B cell (primary cell): ENCODE measurements at regions of chr10 and their contacts with region 1.

Region 1: DNA sequence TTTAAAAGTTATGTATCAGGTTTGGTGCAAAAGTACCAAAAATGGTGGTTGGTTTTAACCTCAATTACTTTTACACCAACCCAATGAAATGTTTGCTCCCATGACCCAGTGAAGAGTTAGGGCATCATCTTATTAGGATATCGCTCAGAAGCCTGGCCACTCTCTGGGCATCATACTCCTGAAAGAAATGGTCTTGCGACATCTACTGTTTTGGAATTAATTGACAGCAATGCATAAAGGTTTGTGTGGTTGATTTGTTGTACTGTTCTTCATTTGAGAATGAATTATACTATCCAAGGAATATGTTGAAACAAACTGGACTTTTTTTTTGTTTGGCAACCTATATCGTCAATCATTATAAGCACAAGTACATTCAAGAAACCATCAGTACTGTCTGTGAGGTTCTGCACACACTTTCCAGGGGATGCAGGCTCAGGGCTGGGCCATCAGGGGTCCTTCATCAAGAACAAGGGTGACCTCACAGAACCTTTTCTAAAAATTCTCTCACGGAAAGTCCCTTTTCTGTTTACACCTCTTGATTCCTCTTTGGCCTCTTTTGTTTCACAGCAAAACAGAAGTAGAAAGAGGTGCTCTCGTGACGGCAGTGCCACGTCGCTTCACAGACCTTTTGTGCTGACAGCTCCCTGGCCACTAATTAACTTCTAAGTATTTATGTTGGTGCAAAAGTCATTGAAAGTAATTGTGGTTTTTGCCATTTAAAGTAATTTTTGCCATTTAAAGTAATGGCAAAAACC is 117.2 kb upstream of the KLF6 start:
- DNase-seq: peak; percentile 91
- ATAC-seq: peak; percentile 84
- H3K4me3 ChIP-seq: peak overlapping the region in 1 of 5 experiments; percentile 30
- H3K4me3 Mint-ChIP-seq: peak overlapping the region; percentile 57
- H3K27ac ChIP-seq: peak overlapping the region; percentile 94 to 99
- H3K27ac Mint-ChIP-seq: peak overlapping the region; percentile 94
- H3K4me1 ChIP-seq: peaks cover 50 to 64% of the 10 kb centered on the region in 2 donors
- H3K4me1 Mint-ChIP-seq: peaks cover 52% of the 10 kb centered on the region
- H3K27me3 ChIP-seq: no peaks in the 10 kb centered on the region
- H3K27me3 Mint-ChIP-seq: no peaks in the 10 kb centered on the region
- CTCF ChIP-seq: peak; percentile 24

Region 2: GRCh38 chr10:3805791-3806461 is 96.3 kb before region 1 on chr10:
- CTCF ChIA-PET with region 1: no interaction called
- POLR2A ChIA-PET with region 1: no interaction called
- intact Hi-C with region 1: loop called (anchors 1 kb)
- DNase-seq: peak; percentile 59
- ATAC-seq: peak; percentile 54
- H3K4me3 ChIP-seq: peak overlapping the region in 1 of 5 experiments; percentile 16
- H3K4me3 Mint-ChIP-seq: peak overlapping the region; percentile 74
- H3K27ac ChIP-seq: peak overlapping the region; percentile 84 to 85
- H3K27ac Mint-ChIP-seq: peak overlapping the region; percentile 97
- H3K4me1 ChIP-seq: peaks cover 49 to 50% of the 10 kb centered on the region in 2 donors
- H3K4me1 Mint-ChIP-seq: peaks cover 58% of the 10 kb centered on the region
- H3K27me3 ChIP-seq: no peaks in the 10 kb centered on the region
- H3K27me3 Mint-ChIP-seq: no peaks in the 10 kb centered on the region
- CTCF ChIP-seq: no peak

Region 3: DNA sequence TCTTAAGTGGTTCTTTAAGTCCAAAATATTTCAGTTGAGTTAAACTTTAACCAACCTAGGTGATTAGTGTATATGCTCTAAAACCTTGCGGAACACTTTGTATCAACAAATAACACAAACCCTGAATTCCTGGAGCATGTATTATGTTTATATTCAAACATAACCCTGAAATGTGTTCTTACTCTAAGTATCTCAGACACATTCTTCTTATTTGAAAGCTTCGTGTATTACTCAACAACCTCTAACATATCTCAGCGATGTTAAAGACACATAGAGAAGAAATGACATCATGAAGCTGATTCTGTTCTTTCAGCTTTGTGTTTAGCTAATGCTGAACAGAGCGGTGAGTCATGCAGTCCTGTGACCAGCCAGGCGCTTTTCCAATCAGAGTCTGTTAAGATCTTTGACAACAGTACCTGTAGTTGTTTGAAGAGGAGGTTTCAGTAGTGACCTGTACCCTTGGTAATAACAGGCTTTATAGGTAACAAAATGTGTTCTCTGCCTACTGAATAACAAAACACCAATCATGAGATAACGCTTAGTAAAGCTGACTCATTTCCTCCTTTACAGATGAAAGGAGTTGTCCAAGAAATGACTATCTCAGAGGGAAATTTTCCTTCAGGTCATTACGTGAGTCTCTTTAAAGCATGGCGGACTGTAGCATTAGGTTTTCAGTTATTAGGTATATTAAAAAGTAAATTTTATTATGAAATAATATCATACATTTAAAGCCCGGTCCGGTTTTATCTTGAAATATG is 49.9 kb before region 1 on chr10:
- CTCF ChIA-PET with region 1: no interaction called
- POLR2A ChIA-PET with region 1: no interaction called
- intact Hi-C with region 1: loop called (anchors 1 kb)
- DNase-seq: peak; percentile 53
- ATAC-seq: peak; percentile 70
- H3K4me3 ChIP-seq: no peak overlapping the region
- H3K4me3 Mint-ChIP-seq: peak overlapping the region; percentile 50
- H3K27ac ChIP-seq: peak overlapping the region; percentile 66 to 74
- H3K27ac Mint-ChIP-seq: peak overlapping the region; percentile 85
- H3K4me1 ChIP-seq: peaks cover 15 to 22% of the 10 kb centered on the region in 2 donors
- H3K4me1 Mint-ChIP-seq: peaks cover 32% of the 10 kb centered on the region
- H3K27me3 ChIP-seq: no peaks in the 10 kb centered on the region
- H3K27me3 Mint-ChIP-seq: no peaks in the 10 kb centered on the region
- CTCF ChIP-seq: no peak

Region 4: GRCh38 chr10:3935141-3935540 is 32.9 kb after region 1 on chr10:
- CTCF ChIA-PET with region 1: interaction called, 3 read pairs
- POLR2A ChIA-PET with region 1: no interaction called
- intact Hi-C with region 1: loop called (anchors 2 kb)
- DNase-seq: peak; percentile 78
- ATAC-seq: peak; percentile 97
- H3K4me3 ChIP-seq: peak overlapping the region in 4 of 5 experiments; percentile 10 to 51 (median 40)
- H3K4me3 Mint-ChIP-seq: peak overlapping the region; percentile 72
- H3K27ac ChIP-seq: peak overlapping the region; percentile 68
- H3K27ac Mint-ChIP-seq: peak overlapping the region; percentile 87
- H3K4me1 ChIP-seq: peaks cover 13 to 21% of the 10 kb centered on the region in 2 donors
- H3K4me1 Mint-ChIP-seq: peaks cover 27% of the 10 kb centered on the region
- H3K27me3 ChIP-seq: no peaks in the 10 kb centered on the region
- H3K27me3 Mint-ChIP-seq: no peaks in the 10 kb centered on the region
- CTCF ChIP-seq: no peak

Region 5: GRCh38 chr10:4131407-4132228 is 229.4 kb after region 1 on chr10:
- CTCF ChIA-PET with region 1: no interaction called
- POLR2A ChIA-PET with region 1: no interaction called
- intact Hi-C with region 1: loop called (anchors 10 kb)
- DNase-seq: peak; percentile 79
- ATAC-seq: peak; percentile 71
- H3K4me3 ChIP-seq: peak overlapping the region in 4 of 5 experiments; percentile 0 to 51 (median 32)
- H3K4me3 Mint-ChIP-seq: no peak overlapping the region
- H3K27ac ChIP-seq: peak overlapping the region; percentile 21 to 71
- H3K27ac Mint-ChIP-seq: no peak overlapping the region
- H3K4me1 ChIP-seq: peaks cover 70 to 71% of the 10 kb centered on the region in 2 donors
- H3K4me1 Mint-ChIP-seq: peaks cover 45% of the 10 kb centered on the region
- H3K27me3 ChIP-seq: no peaks in the 10 kb centered on the region
- H3K27me3 Mint-ChIP-seq: no peaks in the 10 kb centered on the region
- CTCF ChIP-seq: no peak

Region 6: GRCh38 chr10:4333459-4333894 is 431.2 kb after region 1 on chr10:
- CTCF ChIA-PET with region 1: no interaction called
- POLR2A ChIA-PET with region 1: no interaction called
- intact Hi-C with region 1: loop called (anchors 1 kb)
- DNase-seq: no peak
- ATAC-seq: peak; percentile 46
- H3K4me3 ChIP-seq: no peak overlapping the region
- H3K4me3 Mint-ChIP-seq: no peak overlapping the region
- H3K27ac ChIP-seq: peak overlapping the region; percentile 84 to 96
- H3K27ac Mint-ChIP-seq: no peak overlapping the region
- H3K4me1 ChIP-seq: peaks cover 3% of the 10 kb centered on the region in 2 donors
- H3K4me1 Mint-ChIP-seq: no peaks in the 10 kb centered on the region
- H3K27me3 ChIP-seq: no peaks in the 10 kb centered on the region
- H3K27me3 Mint-ChIP-seq: no peaks in the 10 kb centered on the region
- CTCF ChIP-seq: peak; percentile 5